T-cell (primary cell): ENCODE measurements at regions of chr17 and their contacts with region 1.

Region 1: GRCh38 chr17:44451832-44452231 is 51.4 kb downstream of the GPATCH8 start:
- DNase-seq: no peak
- ATAC-seq: no peak
- H3K4me3 ChIP-seq: no peak overlapping the region
- H3K4me3 Mint-ChIP-seq: no peak overlapping the region
- H3K27ac ChIP-seq: no peak overlapping the region
- H3K27ac Mint-ChIP-seq: no peak overlapping the region
- H3K4me1 ChIP-seq: no peaks in the 10 kb centered on the region
- H3K4me1 Mint-ChIP-seq: peaks cover 27 to 31% (median 27%) of the 10 kb centered on the region in 3 donors
- H3K27me3 ChIP-seq: no peaks in the 10 kb centered on the region
- H3K27me3 Mint-ChIP-seq: no peaks in the 10 kb centered on the region

Region 2: DNA sequence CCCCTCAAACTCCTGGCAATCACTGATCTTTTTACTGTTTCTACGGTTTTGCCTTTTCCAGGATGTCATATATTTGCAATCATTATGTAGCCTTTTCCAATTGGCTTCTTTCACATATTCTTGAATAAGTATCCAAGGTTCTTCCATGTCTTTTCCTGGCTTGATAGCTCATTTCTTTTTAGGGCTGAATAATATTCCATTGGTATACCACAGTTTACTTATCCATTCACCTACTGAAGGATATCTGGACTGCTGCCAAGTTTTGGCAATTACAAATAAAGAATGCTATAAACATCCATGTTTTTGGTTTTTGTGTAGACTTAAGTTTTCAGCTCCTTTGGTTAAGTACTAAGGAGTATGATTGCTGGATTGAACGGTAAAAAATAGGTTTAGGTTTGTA is 35.3 kb after region 1 on chr17:
- CTCF ChIA-PET with region 1: no interaction called
- POLR2A ChIA-PET with region 1: interaction called in 1 of 2 experiments, 12 read pairs
- DNase-seq: no peak
- ATAC-seq: no peak
- H3K4me3 ChIP-seq: no peak overlapping the region
- H3K4me3 Mint-ChIP-seq: no peak overlapping the region
- H3K27ac ChIP-seq: no peak overlapping the region
- H3K27ac Mint-ChIP-seq: no peak overlapping the region
- H3K4me1 ChIP-seq: no peaks in the 10 kb centered on the region
- H3K4me1 Mint-ChIP-seq: peaks cover 38 to 44% (median 42%) of the 10 kb centered on the region in 3 donors
- H3K27me3 ChIP-seq: no peaks in the 10 kb centered on the region
- H3K27me3 Mint-ChIP-seq: no peaks in the 10 kb centered on the region

Region 3: GRCh38 chr17:44565866-44566443 is 114.1 kb after region 1 on chr17:
- CTCF ChIA-PET with region 1: no interaction called
- POLR2A ChIA-PET with region 1: no interaction called
- DNase-seq: no peak
- ATAC-seq: no peak
- H3K4me3 ChIP-seq: no peak overlapping the region
- H3K4me3 Mint-ChIP-seq: no peak overlapping the region
- H3K27ac ChIP-seq: no peak overlapping the region
- H3K27ac Mint-ChIP-seq: no peak overlapping the region
- H3K4me1 ChIP-seq: no peaks in the 10 kb centered on the region
- H3K4me1 Mint-ChIP-seq: peaks cover 0 to 7% (median 0%) of the 10 kb centered on the region in 3 donors
- H3K27me3 ChIP-seq: peaks cover 3 to 41% of the 10 kb centered on the region in 2 experiments
- H3K27me3 Mint-ChIP-seq: peaks cover 36 to 39% of the 10 kb centered on the region in 2 donors